ENCODE measurements at regions of chr15 and their contacts with region 1.

Region 1: DNA sequence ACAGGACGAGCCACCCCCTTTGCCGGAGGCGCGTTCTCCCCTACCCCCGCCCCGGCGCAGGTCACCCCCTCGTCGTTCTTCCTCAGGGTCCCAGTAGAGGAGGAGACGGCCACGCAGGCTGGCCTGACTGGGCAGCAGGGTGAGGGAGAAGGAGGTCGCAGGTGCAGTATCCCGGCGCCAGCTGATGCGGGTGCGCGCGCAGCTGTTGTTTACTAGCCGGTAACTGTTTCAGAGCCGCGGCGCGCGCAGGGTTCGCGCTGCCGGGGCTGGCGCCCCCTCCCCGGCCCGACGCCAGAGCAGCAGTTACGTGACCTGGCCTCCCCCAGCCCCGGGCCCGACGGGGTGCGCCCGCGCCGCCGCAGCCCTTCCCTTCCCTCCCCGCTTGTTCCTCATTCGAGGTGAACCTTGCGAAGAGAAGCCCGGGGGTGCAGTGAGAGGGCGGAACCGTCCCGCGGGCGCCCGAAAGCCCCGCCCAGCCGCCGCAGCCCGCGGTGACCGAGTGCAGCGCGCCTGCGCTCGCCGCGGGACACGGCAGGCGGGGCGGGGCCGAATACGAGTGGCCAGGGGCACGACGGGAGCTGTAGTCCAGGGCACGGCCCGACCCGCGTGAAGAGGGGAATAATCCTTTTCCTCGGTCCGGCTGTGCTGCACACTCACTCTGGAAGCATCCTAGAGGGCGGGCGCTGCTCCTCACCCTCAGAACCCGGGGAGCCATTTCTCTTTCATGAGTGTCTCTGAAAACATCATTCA is at the start of gene SLC12A6:
- DNase-seq: peak; percentile 96
- total RNA-seq, gene SLC12A6: 18.2 TPM

Region 2: DNA sequence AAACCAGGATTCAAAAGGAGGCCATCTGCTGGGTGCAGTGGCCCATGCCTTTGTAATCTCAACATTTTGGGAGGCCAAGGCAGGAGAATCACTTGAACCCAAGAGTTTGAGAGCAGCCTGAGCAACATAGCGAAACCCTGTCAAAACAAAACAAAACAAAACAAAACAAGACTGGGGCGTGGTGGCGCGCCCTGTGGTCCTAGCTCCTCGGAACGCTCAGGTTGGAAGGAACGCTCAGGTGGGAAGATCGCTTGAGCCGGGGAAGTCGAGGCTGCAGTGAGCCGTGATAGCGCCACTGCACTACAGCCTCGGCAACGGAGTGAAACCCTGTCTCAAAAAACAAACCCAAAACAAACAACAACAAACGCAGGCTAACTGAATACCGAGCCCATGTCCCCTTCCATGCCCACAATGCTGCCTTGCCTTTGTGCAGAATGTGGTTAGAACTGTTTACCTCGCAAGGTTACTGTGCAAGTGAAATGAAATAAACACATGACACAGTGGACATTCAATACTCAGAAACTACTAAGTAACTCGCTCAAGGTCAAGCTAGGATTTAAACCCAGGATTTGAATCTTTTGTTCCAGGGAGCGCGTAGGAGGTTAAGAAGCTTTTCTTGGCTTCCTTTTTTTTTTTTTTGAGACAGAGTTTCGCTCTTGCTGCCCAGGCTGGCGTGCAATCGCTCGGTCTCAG is 113.7 kb before region 1 on chr15:
- intact Hi-C with region 1: loop called (anchors 10 kb)
- DNase-seq: no peak

Region 3: DNA sequence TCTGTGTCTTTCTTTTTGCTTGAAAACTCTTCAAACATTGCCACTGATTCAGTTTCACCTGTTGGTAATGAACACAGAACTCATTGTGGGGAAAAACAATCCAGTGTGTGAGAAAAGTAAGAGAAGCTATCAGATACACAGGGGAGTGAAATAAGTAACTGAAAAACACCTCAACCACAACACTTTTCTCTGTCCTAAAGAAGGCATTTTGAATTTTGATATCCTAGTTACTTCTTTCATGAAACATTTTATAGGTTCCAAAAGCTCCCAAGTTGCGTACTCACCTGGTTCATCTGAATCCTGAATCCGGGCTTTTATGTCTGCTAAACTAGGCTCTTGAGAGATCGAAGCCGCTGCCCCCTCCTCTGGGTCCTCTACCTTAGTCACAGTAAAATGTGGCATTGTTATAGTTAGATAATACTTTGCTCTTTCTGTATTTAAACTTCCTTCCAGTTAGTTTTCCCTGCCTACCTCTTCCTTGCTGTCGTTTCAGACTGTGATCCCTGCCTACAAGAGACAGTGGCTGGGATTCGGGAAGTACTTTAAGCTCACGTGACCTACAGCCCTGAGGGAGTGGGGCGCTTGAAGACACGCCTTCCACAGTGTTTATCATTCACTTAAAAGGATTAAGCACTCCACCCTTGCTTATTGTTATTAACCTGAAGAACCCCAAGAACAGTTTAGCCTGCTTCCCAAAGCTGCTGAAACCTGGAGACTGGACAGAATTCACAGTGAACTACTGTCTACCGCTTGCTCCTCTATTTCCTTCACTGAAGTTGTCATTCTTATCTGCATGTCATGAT is 19.3 kb before region 1 on chr15:
- intact Hi-C with region 1: loop called (anchors 2 kb)
- DNase-seq: peak; percentile 87

Region 4: GRCh38 chr15:34737477-34737876 is 399.7 kb after region 1 on chr15:
- intact Hi-C with region 1: no loop called
- DNase-seq: no peak